Activated T-helper 2 cell treated with anti-CD3 and anti-CD28 coated beads, Interferon-gamma antibody, Interleukin-2, Interleukin-4, amounts not matched to agents 10 μg/mL and 5 μg/mL and 100 μg/mL, durations not matched to agents 14 hours and 24 hours and 36 hours (primary cell): ENCODE measurements at regions of chr17 and their contacts with region 1.

Region 1: DNA sequence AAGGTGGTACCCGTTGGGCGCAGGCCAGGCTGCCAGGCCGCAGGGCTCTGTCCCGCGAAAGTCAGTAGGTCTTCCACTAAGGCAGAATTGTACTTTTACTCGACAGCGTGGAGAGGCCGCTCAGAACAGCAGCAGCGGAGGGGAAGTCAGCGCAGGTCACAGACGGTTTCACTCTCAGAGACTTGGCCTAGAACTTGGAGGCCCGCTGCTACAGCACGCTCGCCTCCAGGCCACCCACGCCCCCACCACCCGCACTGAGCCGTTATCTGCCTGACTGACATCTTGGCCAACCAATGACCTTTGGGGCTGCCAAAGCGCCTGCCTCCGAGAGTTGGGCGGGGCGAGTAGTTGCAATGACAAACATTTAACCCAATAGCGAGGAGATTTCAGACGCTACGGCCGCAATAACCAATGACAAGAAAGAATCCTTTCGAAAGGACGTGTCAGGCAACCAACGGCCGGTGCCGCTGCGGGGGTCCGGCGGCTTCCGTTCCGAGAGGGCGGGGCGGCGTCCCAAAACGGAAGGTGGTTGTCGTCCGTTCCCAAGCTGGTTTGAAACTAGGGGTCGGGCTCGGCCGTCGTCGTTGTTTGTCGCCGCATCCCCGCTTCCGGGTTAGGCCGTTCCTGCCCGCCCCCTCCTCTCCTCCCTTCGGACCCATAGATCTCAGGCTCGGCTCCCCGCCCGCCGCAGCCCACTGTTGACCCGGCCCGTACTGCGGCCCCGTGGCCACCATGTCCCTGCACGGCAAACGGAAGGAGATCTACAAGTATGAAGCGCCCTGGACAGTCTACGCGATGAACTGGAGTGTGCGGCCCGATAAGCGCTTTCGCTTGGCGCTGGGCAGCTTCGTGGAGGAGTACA is at the start of gene DCAF7:
- DNase-seq: peak; percentile 100
- H3K4me3 Mint-ChIP-seq: peak within 1 kb of the TSS; percentile 93
- H3K27ac Mint-ChIP-seq: peak within 1 kb of the TSS; percentile 97
- H3K4me1 Mint-ChIP-seq: peaks cover 30% of the 10 kb centered on the region
- H3K27me3 Mint-ChIP-seq: no peaks in the 10 kb centered on the region
- total RNA-seq, gene DCAF7: 118 and 119 TPM in 2 replicates

Region 2: DNA sequence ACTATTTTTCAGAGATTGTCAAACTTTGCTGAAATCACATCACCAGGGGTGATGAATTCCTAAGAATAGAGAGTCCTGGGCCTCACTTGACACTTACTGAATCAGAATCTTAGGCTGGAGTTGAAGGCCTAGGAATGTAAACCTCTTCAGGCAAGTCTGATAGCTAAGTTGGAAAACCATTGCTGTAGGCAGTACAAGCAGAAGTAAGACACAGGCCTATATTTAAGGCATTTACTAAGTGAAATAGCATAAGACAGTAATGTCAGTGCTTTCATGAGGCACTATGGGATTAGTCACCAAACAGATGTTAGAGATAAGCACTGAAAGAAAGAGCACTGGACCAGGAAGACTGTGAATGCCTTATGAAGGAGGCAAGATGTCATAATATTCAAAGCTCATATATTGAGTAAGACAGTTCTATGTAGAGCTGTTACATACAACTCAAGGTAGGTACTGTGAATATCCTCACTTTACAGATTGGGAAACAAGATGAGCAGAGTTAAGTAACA is 21.6 kb after region 1 on chr17:
- intact Hi-C with region 1: loop called (anchors 2 kb)
- DNase-seq: no peak
- H3K4me3 Mint-ChIP-seq: no peak overlapping the region
- H3K27ac Mint-ChIP-seq: peak overlapping the region; percentile 53
- H3K4me1 Mint-ChIP-seq: peaks cover 22% of the 10 kb centered on the region
- H3K27me3 Mint-ChIP-seq: no peaks in the 10 kb centered on the region

Region 3: GRCh38 chr17:63600569-63601438 is 50.6 kb after region 1 on chr17 and contains the start of gene TACO1:
- intact Hi-C with region 1: loop called (anchors 1 kb)
- DNase-seq: peak; percentile 70
- H3K4me3 Mint-ChIP-seq: peak within 1 kb of the TSS; percentile 90
- H3K27ac Mint-ChIP-seq: peak within 1 kb of the TSS; percentile 74
- H3K4me1 Mint-ChIP-seq: peaks cover 34% of the 10 kb centered on the region
- H3K27me3 Mint-ChIP-seq: no peaks in the 10 kb centered on the region
- total RNA-seq, gene TACO1: 20.4 and 22.4 TPM in 2 replicates

Region 4: GRCh38 chr17:63621766-63622519 is 71.8 kb after region 1 on chr17 and contains the start of gene MAP3K3:
- intact Hi-C with region 1: loop called (anchors 1 kb)
- DNase-seq: peak; percentile 98
- H3K4me3 Mint-ChIP-seq: peak within 1 kb of the TSS; percentile 99
- H3K27ac Mint-ChIP-seq: peak within 1 kb of the TSS; percentile 92
- H3K4me1 Mint-ChIP-seq: peaks cover 31% of the 10 kb centered on the region
- H3K27me3 Mint-ChIP-seq: peaks cover 13% of the 10 kb centered on the region
- total RNA-seq, gene MAP3K3: 27.9 and 28.7 TPM in 2 replicates

Region 5: GRCh38 chr17:63697341-63698286 is 147.4 kb after region 1 on chr17:
- intact Hi-C with region 1: loop called (anchors 2 kb)
- DNase-seq: peak; percentile 77
- H3K4me3 Mint-ChIP-seq: peak overlapping the region; percentile 93
- H3K27ac Mint-ChIP-seq: peak overlapping the region; percentile 90
- H3K4me1 Mint-ChIP-seq: peaks cover 46% of the 10 kb centered on the region
- H3K27me3 Mint-ChIP-seq: no peaks in the 10 kb centered on the region

Region 6: DNA sequence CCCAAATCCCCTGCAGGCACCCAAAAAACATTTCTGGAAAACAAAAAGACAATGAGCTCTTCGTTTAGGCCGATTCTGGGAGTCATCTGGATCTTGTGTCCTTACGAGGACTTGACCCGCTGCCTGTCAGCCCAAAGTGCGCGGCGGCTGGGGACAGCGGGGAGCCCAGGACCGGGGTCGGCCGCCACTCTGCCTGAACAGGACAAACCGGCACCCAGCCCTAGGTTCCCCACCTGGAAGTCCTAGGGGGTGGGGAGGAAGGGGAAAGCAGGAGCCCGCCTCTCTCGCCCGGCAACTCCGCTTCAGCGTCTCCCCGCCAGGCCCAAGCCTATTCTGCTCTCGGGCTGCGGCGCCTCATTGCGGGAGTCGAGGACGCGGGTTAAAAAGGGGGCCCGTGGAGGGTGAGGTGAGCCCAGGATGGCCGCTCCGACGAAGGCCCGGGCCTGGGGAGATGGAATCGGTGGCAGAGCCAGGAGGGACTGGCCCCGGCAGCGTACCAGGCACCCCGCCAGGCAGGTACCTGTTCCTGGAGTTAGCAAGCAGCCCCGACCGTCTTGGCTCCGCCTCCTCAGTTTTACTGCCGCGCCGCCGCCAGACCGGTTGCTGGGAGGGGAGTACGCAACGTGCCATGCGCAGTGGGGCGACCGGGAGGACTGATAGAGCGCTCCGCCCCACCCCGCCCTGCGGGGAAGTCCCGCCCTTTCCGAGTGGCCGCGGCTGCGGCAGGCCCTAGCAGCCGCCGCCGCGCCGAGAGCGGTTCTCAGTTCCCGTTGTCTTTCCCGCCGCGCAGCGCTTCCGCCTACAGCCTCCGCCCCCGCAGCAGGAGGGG is 191.3 kb after region 1 on chr17 and contains the start of gene STRADA:
- intact Hi-C with region 1: loop called (anchors 1 kb)
- DNase-seq: peak; percentile 99
- H3K4me3 Mint-ChIP-seq: peak within 1 kb of the TSS; percentile 98
- H3K27ac Mint-ChIP-seq: peak within 1 kb of the TSS; percentile 96
- H3K4me1 Mint-ChIP-seq: peaks cover 20% of the 10 kb centered on the region
- H3K27me3 Mint-ChIP-seq: no peaks in the 10 kb centered on the region
- total RNA-seq, gene STRADA: 54.0 and 57.4 TPM in 2 replicates

Region 7: GRCh38 chr17:63773381-63774140 is 223.4 kb after region 1 on chr17 and contains the start of gene CCDC47:
- intact Hi-C with region 1: loop called (anchors 1 kb)
- DNase-seq: peak; percentile 99
- H3K4me3 Mint-ChIP-seq: peak within 1 kb of the TSS; percentile 92
- H3K27ac Mint-ChIP-seq: peak within 1 kb of the TSS; percentile 99
- H3K4me1 Mint-ChIP-seq: peaks cover 36% of the 10 kb centered on the region
- H3K27me3 Mint-ChIP-seq: no peaks in the 10 kb centered on the region
- total RNA-seq, gene CCDC47: 70.0 and 73.7 TPM in 2 replicates